HCT116 (cell line): ENCODE measurements at regions of chr18 and their contacts with region 1.

Region 1: DNA sequence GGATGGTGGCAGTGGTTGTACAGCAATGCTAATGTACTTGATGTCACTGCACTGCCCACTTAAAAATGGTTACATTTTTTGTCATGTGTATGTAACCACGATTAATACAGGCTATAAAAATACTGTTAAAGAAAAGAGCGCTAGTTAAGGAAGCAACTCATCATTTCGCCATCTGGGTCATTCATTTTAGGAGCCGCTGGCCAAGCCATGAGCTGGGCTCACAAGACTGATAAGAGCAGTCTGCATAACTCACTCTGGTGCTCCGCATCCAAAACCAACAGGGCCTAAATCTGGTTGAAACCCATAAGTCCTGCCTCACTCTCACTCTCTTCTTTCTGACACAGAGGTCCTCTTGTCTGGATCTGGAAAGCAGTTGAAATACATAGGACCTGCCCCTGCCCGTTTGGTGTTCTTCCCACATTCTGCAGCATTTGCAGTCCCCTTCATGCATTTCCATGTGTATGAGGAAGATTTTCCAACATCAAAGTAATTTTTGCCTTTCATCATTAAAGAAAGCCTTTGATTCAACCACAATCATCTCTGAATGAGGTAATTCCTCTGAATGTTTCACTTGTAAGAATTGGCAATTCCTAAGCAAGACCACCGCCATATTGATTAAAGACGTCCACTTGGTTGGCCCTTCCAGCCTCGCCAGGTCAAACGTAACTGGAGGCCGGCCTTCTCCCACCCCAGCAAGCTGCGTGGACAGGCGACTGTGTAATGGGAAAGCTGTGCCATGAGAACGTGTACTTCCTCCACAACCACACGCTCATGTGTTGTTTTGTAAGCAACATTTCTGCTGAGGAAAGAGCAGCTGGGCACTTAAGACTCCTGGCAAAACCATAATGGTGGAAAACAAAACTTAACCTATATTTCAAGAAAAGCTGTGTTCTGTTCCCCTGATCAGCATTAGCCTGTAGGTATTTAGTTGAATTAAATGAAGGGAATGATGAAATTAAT is 112.2 kb downstream of the VAPA start:
- DNase-seq: no peak
- ATAC-seq: no peak
- H3K4me3 ChIP-seq: no peak overlapping the region
- H3K27ac ChIP-seq: no peak overlapping the region
- H3K4me1 ChIP-seq: no peaks in the 10 kb centered on the region
- H3K27me3 ChIP-seq: no peaks in the 10 kb centered on the region
- CTCF ChIP-seq: no peak
- POLR2A ChIP-seq: no peak
- RAD21 ChIP-seq: no peak

Region 2: DNA sequence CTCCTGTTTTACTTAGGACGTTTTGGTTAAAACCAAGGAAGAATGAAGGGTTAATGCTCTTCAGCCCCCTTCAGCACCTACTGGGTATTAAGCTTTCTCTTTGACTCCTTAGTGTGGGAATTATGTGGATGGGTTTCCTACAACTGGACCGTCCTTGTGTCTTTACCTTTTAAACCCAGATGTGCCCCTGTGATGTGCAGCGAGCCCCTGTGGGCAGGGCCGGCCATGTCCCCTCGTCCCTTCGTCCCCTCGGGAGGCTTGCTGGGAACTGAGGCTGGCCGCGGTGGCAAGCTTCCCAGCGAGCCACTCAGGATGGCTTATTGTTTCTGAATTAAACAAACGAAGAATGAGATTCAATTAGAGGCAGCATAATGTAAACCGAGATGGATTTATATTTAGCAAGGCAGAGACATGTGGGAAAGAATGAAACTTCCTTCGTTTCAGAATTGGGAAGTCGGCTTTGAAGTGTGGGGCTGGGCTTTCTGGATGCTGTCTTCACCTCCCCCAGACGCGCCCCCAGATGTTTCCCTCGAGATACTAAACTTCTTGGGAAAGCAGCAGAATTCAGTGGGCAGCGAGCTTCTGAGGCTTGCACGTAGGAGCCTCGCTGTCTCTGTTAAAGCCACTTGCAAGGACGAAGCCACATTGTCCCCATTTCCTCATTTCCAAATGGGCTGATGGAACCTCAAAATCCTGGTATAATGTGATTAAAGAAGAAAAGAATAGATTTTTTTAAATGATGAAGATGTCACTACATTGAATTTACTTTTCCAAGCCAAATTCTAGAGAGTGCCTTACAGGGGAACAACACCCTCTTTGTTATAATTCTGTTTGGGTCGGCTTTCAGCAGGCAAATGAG is 33.8 kb after region 1 on chr18:
- CTCF ChIA-PET with region 1: no interaction called
- POLR2A ChIA-PET with region 1: no interaction called
- RAD21 ChIA-PET with region 1: no interaction called
- intact Hi-C with region 1: loop called (anchors 5 kb)
- DNase-seq: no peak
- ATAC-seq: no peak
- H3K4me3 ChIP-seq: no peak overlapping the region
- H3K27ac ChIP-seq: no peak overlapping the region
- H3K4me1 ChIP-seq: peaks cover 4 to 10% of the 10 kb centered on the region in 2 experiments; a peak in 2 of 4 replicates
- H3K27me3 ChIP-seq: 0 out of 2 replicates have a peak, but pooled peaks cover 8% of the 10 kb centered on the region
- CTCF ChIP-seq: no peak
- POLR2A ChIP-seq: no peak
- RAD21 ChIP-seq: no peak

Region 3: GRCh38 chr18:11570769-11571168 is 1544.8 kb after region 1 on chr18:
- CTCF ChIA-PET with region 1: no interaction called
- POLR2A ChIA-PET with region 1: no interaction called
- RAD21 ChIA-PET with region 1: no interaction called
- intact Hi-C with region 1: no loop called
- DNase-seq: no peak
- ATAC-seq: peak; percentile 50; the same call in 1 of the 2 replicates
- H3K4me3 ChIP-seq: no peak overlapping the region
- H3K27ac ChIP-seq: no peak overlapping the region
- H3K4me1 ChIP-seq: no peaks in the 10 kb centered on the region
- H3K27me3 ChIP-seq: peaks cover 49% of the 10 kb centered on the region
- CTCF ChIP-seq: peak in 2 of 3 experiments; percentile 17 to 52; a peak in 3 of 6 replicates
- POLR2A ChIP-seq: no peak
- RAD21 ChIP-seq: peak; percentile 38